Ovary (tissue), 10 donors: ENCODE measurements at regions of chr21 and their contacts with region 1.

Region 1: DNA sequence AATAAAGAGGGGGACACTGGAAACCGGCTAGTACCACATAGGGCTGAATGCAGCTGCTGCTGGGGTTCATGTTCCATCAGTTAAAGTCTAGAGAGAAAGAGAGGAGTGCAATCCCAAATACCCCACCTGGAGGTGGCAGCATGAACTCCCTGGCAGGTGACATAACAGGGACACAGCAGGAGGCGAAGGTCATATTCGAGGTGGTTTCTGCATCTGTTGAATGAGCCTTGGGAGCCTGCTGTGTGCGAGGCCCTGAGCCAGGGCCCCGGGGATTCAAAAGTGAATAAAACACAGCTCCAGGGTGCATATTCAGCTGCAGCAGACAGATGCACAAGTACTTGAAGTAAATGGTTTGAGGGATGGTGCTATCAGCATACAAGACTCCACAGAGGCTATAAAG is 456.8 kb downstream of the SETD4 start:
- DNase-seq: no peak
- H3K4me3 ChIP-seq: no peak overlapping the region
- H3K27ac ChIP-seq: no peak overlapping the region
- H3K4me1 ChIP-seq: no peaks in the 10 kb centered on the region
- H3K27me3 ChIP-seq: no peaks in the 10 kb centered on the region
- CTCF ChIP-seq: no peak
- EP300 ChIP-seq: no peak
- POLR2A ChIP-seq: no peak

Region 2: DNA sequence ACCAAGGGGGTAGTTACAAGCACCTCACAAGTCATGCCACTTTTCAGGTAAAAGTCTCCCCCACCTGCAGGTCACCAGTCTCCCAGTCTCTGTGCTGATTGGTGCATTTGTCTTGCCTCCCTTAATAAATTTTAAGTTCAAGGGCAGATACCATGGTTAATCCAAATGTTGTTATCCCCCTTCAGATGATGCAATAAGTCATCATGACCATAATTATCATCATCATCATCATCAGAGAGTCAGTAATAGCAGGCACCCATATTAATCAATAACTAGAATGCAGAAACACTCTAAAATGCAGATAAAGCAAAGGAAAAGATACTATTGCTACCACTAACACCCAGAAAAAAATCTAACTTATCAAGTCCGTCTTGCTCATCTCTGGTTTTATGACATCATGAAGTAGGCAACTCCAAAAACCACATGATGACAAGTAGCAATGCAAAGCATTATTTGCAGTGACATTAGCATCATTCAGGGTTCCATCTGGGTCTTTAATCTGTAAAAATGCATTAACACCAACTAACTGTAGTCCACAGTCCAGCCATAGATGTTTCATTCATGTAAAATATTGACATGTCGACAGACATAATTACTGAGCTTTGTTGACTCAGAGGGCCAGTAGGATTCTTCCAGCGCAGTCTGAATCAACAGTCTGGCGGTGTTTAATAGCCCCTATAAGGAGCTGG is 62.4 kb before region 1 on chr21:
- intact Hi-C with region 1: loop called in 1 of 4 experiments (anchors 10 kb)
- DNase-seq: no peak
- H3K4me3 ChIP-seq: no peak overlapping the region
- H3K27ac ChIP-seq: no peak overlapping the region
- H3K4me1 ChIP-seq: no peaks in the 10 kb centered on the region
- H3K27me3 ChIP-seq: no peaks in the 10 kb centered on the region
- CTCF ChIP-seq: no peak
- EP300 ChIP-seq: no peak
- POLR2A ChIP-seq: no peak

Region 3: DNA sequence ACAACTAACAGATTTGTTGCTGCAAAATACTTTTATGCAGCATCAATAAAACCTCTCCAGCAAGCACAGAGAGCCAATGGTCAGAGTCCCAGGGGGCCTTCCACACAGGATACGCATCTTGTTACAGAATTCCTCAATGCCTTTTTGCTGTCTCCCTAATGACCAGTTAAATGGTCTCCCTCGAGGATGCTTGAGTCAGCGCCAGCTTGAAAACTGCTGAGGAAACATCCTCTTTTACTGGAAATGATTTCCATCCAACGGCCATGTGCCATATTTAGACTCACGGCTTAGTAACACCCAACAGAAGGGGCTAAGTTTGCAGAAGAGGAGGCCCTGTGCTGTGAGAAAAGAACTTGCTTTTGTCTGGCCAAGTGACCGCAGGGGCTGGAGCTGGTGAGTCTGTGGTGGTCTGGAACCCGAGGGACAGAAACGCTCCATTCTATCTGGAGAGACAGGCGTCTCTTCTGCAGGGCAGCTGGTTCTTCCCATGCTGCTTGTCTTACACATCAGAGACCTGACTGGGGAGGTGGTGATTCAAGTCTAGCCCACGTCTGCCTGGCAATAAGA is 39.5 kb before region 1 on chr21:
- intact Hi-C with region 1: loop called in 1 of 4 experiments (anchors 2 kb)
- DNase-seq: peak in 4 of 5 donors; percentile 21 to 46 (median 30)
- H3K4me3 ChIP-seq: no peak overlapping the region
- H3K27ac ChIP-seq: no peak overlapping the region
- H3K4me1 ChIP-seq: no peaks in the 10 kb centered on the region
- H3K27me3 ChIP-seq: no peaks in the 10 kb centered on the region
- CTCF ChIP-seq: no peak
- EP300 ChIP-seq: no peak
- POLR2A ChIP-seq: no peak